Vagina (tissue), 2 donors: ENCODE measurements at regions of chr5 and their contacts with region 1.

Region 1: DNA sequence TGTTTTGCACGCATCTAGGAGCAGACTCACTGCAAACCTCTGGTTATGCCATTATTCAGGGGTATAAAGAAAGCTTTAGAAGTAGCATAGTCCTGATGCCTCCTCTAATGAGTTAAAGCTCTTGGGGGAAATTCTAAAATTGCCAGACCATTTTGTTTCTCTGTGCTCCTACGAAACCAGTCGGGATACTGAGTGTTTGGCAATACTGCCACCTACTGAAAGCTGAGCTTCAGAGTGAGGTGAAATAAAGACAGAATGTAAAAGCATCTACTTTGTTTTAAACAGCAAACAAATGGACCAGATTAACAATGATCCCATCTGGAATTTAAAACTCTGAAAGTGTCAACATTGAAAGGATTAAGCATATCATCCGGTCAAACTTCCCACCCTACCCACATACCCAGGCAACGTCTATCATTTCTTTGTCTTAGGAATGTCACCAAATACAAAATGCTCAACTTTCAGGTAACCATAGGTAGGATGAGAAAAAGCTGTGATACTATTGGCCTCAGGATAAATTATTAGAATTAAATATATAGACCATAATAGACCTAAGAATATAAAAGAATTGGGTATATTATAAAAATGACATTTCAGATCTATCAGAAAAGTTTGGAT is 77.8 kb upstream of the SHISAL2B start:
- DNase-seq: no peak
- H3K4me3 ChIP-seq: no peak overlapping the region
- H3K27ac ChIP-seq: no peak overlapping the region
- H3K4me1 ChIP-seq: no peaks in the 10 kb centered on the region
- H3K27me3 ChIP-seq: no peaks in the 10 kb centered on the region
- CTCF ChIP-seq: peak in 1 of 3 experiments; percentile 42
- POLR2A ChIP-seq: no peak

Region 2: GRCh38 chr5:64229163-64229774 is 383.2 kb before region 1 on chr5:
- intact Hi-C with region 1: loop called (anchors 2 kb)
- DNase-seq: no peak
- H3K4me3 ChIP-seq: no peak overlapping the region
- H3K27ac ChIP-seq: no peak overlapping the region
- H3K4me1 ChIP-seq: no peaks in the 10 kb centered on the region
- H3K27me3 ChIP-seq: no peaks in the 10 kb centered on the region
- CTCF ChIP-seq: peak in 2 of 3 experiments; percentile 14 to 27
- POLR2A ChIP-seq: no peak